Left cardiac atrium (tissue), 4 donors: ENCODE measurements at regions of chrX and their contacts with region 1.

Region 1: GRCh38 chrX:101429934-101430333 is 21.9 kb downstream of the HNRNPH2 start:
- DNase-seq: no peak
- ATAC-seq: no peak

Region 2: DNA sequence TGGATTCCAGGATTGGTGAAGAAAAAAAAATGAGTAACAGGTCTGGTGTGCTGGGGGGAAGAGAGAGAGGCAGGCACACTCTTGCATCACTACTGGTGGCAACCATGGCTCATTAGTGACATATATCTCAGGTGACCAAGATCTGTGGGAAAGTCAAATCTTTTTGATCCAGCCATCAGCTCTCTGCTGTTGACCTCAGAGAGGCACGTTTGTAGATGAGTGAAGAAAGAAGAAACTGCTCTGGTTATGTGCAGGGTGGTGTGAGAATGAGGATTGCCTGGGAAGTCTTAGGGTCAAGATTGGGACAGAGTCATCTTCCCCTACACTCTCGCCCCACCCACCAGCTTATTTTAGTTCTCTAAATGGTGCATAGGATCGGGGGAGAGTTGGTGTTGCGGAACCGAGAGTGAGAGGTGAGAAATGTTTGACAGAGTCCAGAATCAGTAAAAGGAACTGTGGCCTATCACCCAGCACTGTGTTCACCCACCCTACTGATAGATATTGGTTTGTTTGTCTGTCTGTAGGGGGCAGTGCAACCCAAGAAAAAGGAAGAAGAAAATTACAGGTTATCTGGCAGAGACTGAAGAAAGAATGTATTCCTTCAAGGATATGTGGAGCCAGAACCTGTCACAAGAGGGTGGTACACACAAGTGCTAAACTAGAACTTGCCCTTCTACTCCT is 165.9 kb after region 1 on chrX:
- intact Hi-C with region 1: loop called in 1 of 2 experiments (anchors 10 kb)
- DNase-seq: no peak
- ATAC-seq: peak; percentile 30 to 77